ENCODE measurements at regions of chr11 and their contacts with region 1.

Region 1: GRCh38 chr11:107970049-107970448 is 38.6 kb upstream of the CUL5 start:
- DNase-seq: no peak

Region 2: DNA sequence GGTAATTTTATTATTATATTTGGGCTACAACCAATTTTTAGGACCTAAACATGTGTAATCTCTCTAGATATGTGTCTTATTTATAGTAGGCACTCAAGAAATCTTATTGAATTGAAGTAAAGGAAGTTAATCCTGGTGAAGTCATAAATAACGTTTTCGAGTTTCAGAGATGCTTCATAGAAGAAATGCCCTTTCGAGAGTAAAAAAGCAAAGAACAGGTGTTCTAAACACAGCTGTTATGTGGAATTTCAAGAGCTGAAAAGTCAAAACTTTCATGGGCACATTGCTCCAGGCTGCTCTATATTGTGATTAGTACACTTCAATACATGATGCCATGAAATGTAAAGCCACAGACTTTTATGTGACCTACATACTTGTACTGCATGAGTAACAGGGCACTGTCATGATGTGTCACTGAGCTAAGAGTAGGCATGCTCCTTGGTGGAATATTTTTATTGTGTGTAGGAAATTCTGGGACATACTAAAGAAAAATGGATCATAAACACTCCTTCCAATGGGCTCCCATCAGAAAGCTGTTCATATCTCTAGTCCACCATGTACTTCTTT is 386.3 kb before region 1 on chr11:
- intact Hi-C with region 1: loop called in 1 of 2 experiments (anchors 5 kb)
- DNase-seq: no peak